Heart left ventricle (tissue), 16 donors: ENCODE measurements at regions of chr11 and their contacts with region 1.

Region 1: GRCh38 chr11:85627998-85628770 is at the start of gene TMEM126B:
- DNase-seq: peak; percentile 98 to 99 (median 98)
- ATAC-seq: peak; percentile 99 to 100 (median 99)
- H3K4me3 ChIP-seq: peak within 1 kb of the TSS; percentile 52 to 83 (median 77)
- H3K27ac ChIP-seq: peak within 1 kb of the TSS; percentile 76 to 96 (median 90)
- H3K4me1 ChIP-seq: peaks cover 0 to 34% (median 15%) of the 10 kb centered on the region in 12 donors
- H3K27me3 ChIP-seq: no peaks in the 10 kb centered on the region
- CTCF ChIP-seq: no peak
- POLR2A ChIP-seq: peak; percentile 45 to 96
- total RNA-seq, gene TMEM126B: 42.7 to 58.4 (median 52.1) TPM

Region 2: GRCh38 chr11:85647604-85648299 is 19.6 kb after region 1 on chr11 and contains the start of gene TMEM126A:
- intact Hi-C with region 1: loop called in 3 of 10 experiments (anchors 1 to 2 kb)
- DNase-seq: peak; percentile 89 to 94 (median 92)
- ATAC-seq: peak; percentile 97 to 99 (median 98)
- H3K4me3 ChIP-seq: peak within 1 kb of the TSS; percentile 54 to 90 (median 71)
- H3K27ac ChIP-seq: peak within 1 kb of the TSS in 11 of 12 donors; percentile 69 to 89 (median 85)
- H3K4me1 ChIP-seq: peaks cover 0 to 26% (median 18%) of the 10 kb centered on the region in 12 donors
- H3K27me3 ChIP-seq: no peaks in the 10 kb centered on the region
- CTCF ChIP-seq: no peak
- POLR2A ChIP-seq: peak; percentile 14 to 67
- total RNA-seq, gene TMEM126A: 36.3 to 77.9 (median 63.6) TPM

Region 3: DNA sequence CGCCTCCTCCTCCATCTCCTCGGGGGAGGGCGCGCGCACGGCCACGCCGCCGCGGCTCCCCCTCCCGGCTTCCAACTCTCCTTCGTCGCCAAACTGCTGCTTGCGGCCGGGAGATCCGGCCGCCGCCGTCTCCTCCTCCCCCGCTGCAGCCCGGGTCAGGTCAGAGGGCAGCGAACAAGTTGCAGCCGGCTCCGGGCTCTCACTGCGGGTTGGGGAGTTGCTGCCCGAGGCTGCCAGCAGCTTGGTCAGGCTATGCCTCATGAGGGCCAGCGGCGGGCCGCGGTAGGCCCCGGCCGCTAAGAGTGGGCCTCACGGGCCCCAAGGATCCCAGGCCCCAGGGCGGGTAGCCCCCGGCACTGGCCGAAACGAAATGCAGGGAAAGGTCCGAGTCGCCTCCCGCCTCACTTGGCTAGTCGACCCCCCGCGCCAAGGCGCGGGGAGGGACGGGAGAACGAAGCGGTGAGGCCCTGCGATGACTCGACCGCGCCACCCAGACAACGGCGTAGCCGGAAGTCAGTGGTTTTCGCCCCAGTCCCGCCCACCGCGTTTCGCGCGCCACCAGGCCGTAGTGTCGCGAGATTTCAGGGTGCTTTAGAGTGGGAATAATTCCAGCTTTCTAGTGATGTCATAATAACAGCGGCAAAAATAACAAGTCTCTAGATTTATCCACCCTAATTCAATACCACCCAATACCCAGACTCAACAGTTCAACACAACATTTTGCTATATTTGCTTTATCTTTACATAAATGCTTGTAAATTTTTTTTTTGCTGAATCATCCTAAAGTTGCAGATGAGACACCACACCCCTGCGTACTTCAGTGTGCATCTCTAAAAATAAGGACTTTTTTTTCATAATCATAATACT is 36.7 kb after region 1 on chr11 and contains the start of gene CREBZF:
- intact Hi-C with region 1: loop called in 9 of 10 experiments (anchors 1 to 5 kb)
- DNase-seq: peak; percentile 95 to 97 (median 95)
- ATAC-seq: peak; percentile 93 to 96 (median 96)
- H3K4me3 ChIP-seq: peak within 1 kb of the TSS; percentile 71 to 94 (median 88)
- H3K27ac ChIP-seq: peak within 1 kb of the TSS; percentile 92 to 99 (median 96)
- H3K4me1 ChIP-seq: peaks cover 0 to 42% (median 35%) of the 10 kb centered on the region in 12 donors
- H3K27me3 ChIP-seq: no peaks in the 10 kb centered on the region
- CTCF ChIP-seq: no peak
- POLR2A ChIP-seq: peak in 1 of 2 donors; percentile 95
- total RNA-seq, gene CREBZF: 11.8 to 17.8 (median 12.9) TPM

Region 4: GRCh38 chr11:86244522-86245368 is 616.6 kb after region 1 on chr11 and contains the start of gene EED:
- intact Hi-C with region 1: loop called in 2 of 10 experiments (anchors 2 to 5 kb)
- DNase-seq: peak; percentile 96 to 98 (median 97)
- ATAC-seq: peak; percentile 85 to 97 (median 94)
- H3K4me3 ChIP-seq: peak within 1 kb of the TSS; percentile 68 to 97 (median 86)
- H3K27ac ChIP-seq: peak within 1 kb of the TSS; percentile 94 to 100 (median 99)
- H3K4me1 ChIP-seq: peaks cover 0 to 48% (median 33%) of the 10 kb centered on the region in 12 donors
- H3K27me3 ChIP-seq: peaks cover 0 to 3% (median 0%) of the 10 kb centered on the region in 9 donors
- CTCF ChIP-seq: no peak
- POLR2A ChIP-seq: peak in 1 of 2 donors; percentile 54
- total RNA-seq, gene EED: 4.9 to 13.3 (median 11.4) TPM